ENCODE measurements at regions of chr4 and their contacts with region 1.

Region 1: GRCh38 chr4:76545226-76545884 is 110.3 kb downstream of the SHROOM3 start:
- DNase-seq: peak in 1 of 9 experiments; percentile 25
- ATAC-seq: no peak
- H3K4me3 ChIP-seq: no peak overlapping the region
- H3K4me3 Mint-ChIP-seq: no peak overlapping the region
- H3K27ac ChIP-seq: no peak overlapping the region
- H3K27ac Mint-ChIP-seq: no peak overlapping the region
- H3K4me1 ChIP-seq: peaks cover 8% of the 10 kb centered on the region
- H3K4me1 Mint-ChIP-seq: peaks cover 14% of the 10 kb centered on the region
- H3K27me3 ChIP-seq: no peaks in the 10 kb centered on the region
- H3K27me3 Mint-ChIP-seq: no peaks in the 10 kb centered on the region
- CTCF ChIP-seq: no peak

Region 2: DNA sequence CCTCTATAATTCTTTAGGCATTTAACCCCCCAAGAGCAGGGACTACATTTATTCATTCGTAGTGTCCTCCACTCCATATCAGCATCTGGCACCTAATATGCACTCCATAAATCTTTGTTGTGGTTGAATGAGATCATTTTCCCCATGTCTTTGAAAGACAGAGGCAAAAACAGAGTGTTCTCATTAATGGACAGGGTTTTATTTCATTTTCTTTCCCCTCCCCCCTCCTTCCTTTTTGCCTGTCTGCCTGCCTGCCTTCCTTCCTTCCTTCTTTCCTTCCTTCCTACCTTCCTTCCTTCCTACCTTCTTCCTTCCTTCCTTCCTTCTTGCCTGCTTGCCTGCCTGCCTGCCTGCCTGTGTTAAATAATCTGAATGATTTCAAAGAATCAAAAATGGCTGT is 27.1 kb before region 1 on chr4:
- CTCF ChIA-PET with region 1: no interaction called
- POLR2A ChIA-PET with region 1: no interaction called
- intact Hi-C with region 1: loop called in 1 of 2 experiments (anchors 1 kb)
- DNase-seq: no peak
- ATAC-seq: no peak
- H3K4me3 ChIP-seq: no peak overlapping the region
- H3K4me3 Mint-ChIP-seq: no peak overlapping the region
- H3K27ac ChIP-seq: no peak overlapping the region
- H3K27ac Mint-ChIP-seq: no peak overlapping the region
- H3K4me1 ChIP-seq: no peaks in the 10 kb centered on the region
- H3K4me1 Mint-ChIP-seq: no peaks in the 10 kb centered on the region
- H3K27me3 ChIP-seq: no peaks in the 10 kb centered on the region
- H3K27me3 Mint-ChIP-seq: no peaks in the 10 kb centered on the region
- CTCF ChIP-seq: no peak